CD4-positive, alpha-beta T cell (primary cell): ENCODE measurements at regions of chr11 and their contacts with region 1.

Region 1: GRCh38 chr11:108467091-108467823 is at the start of gene C11orf65:
- DNase-seq: peak; percentile 92 to 98 (median 94)
- ATAC-seq: peak; percentile 94
- H3K4me3 ChIP-seq: peak within 1 kb of the TSS; percentile 73
- H3K4me3 Mint-ChIP-seq: peak within 1 kb of the TSS; percentile 95
- H3K27ac ChIP-seq: peak within 1 kb of the TSS; percentile 90 to 98
- H3K27ac Mint-ChIP-seq: peak within 1 kb of the TSS; percentile 99
- H3K4me1 ChIP-seq: peaks cover 12% of the 10 kb centered on the region
- H3K4me1 Mint-ChIP-seq: peaks cover 19% of the 10 kb centered on the region
- H3K27me3 ChIP-seq: no peaks in the 10 kb centered on the region
- H3K27me3 Mint-ChIP-seq: no peaks in the 10 kb centered on the region
- CTCF ChIP-seq: no peak
- total RNA-seq, gene C11orf65: 0.30 to 0.75 TPM

Region 2: DNA sequence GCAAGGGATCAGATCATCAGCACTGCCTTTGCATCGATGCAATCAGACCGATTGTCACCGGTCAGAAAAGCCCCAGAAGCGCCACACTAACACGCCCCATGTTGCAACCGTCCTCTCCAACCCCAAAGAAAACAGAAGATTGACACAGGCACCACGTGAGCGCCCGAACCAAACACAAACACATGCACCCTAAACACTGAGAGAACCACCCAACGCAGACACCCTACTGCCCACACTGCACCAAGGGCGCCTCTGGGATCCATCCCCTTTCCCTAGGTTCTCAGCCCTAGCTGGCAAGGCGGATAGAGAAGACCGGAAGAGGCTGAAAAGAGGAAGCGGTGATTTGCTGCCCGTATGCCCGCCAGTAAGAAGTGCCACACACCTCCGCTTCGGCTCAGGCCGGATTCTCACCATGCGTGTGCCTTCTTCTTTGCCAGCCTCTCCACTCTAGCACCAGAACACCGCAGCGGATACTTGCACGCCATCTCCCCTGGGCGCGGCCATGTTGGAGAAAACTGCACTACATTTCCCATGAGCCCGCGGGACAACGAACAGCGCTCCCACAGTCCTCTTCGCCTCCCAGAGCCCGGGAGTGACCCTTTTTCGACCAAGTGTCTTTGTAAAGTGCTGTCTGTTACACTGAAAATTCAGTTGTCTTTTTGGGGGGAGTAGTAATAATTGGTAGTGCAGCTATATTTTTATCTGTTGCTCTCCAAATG is 901.9 kb before region 1 on chr11 and contains the start of gene ALKBH8:
- CTCF ChIA-PET with region 1: no interaction called
- POLR2A ChIA-PET with region 1: no interaction called
- intact Hi-C with region 1: loop called in 1 of 2 experiments (anchors 5 kb)
- DNase-seq: peak; percentile 62 to 90 (median 72)
- ATAC-seq: peak; percentile 95
- H3K4me3 ChIP-seq: peak within 1 kb of the TSS; percentile 70
- H3K4me3 Mint-ChIP-seq: peak within 1 kb of the TSS; percentile 91
- H3K27ac ChIP-seq: peak within 1 kb of the TSS; percentile 57 to 69
- H3K27ac Mint-ChIP-seq: peak within 1 kb of the TSS; percentile 85
- H3K4me1 ChIP-seq: peaks cover 16% of the 10 kb centered on the region
- H3K4me1 Mint-ChIP-seq: peaks cover 56% of the 10 kb centered on the region
- H3K27me3 ChIP-seq: no peaks in the 10 kb centered on the region
- H3K27me3 Mint-ChIP-seq: no peaks in the 10 kb centered on the region
- CTCF ChIP-seq: no peak
- total RNA-seq, gene ALKBH8: 6.5 to 7.7 TPM

Region 3: DNA sequence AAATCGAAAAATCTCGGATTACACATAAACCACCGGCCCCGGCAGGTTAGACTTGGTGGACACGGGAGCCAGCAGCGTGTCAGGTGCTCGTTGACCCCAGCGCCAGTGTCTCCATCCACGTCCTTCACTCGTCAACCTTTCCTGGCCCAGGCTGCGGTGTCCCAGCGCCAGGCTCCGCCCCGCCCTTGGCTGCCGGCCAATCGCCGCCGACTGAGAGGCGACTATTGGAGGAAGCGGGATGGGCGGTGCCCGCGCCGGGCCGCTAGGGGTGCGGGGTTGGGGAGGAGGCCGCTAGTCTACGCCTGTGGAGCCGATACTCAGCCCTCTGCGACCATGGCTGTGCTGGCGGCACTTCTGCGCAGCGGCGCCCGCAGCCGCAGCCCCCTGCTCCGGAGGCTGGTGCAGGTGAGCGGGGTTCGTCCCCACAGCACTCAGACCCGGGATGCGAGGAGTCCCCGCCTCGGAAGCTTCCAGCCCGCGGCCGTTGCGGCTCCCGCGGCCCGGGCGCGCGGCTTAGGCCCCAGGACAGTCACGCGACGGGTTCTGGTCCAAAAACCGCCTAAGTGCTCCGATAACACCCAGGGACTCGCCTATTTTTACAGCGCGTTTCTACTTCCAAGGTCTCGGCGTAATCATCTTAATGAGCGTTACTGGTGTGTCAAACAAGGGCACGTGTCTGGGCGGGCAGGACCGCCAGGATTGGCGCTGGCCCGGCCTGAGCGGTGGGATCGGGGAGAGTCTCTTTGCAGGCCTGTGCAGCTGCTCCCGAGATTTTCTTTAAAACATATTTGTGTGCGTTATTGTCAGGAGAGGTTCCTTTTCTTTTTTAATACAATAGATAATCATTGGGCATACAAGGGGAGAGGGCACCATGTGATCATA is 345.7 kb before region 1 on chr11 and contains the start of gene ACAT1:
- CTCF ChIA-PET with region 1: no interaction called
- POLR2A ChIA-PET with region 1: no interaction called
- intact Hi-C with region 1: loop called in 1 of 2 experiments (anchors 5 kb)
- DNase-seq: peak; percentile 91 to 98 (median 96)
- ATAC-seq: peak; percentile 98
- H3K4me3 ChIP-seq: peak within 1 kb of the TSS; percentile 84
- H3K4me3 Mint-ChIP-seq: peak within 1 kb of the TSS; percentile 89
- H3K27ac ChIP-seq: peak within 1 kb of the TSS in 1 of 2 donors; percentile 46
- H3K27ac Mint-ChIP-seq: peak within 1 kb of the TSS; percentile 53
- H3K4me1 ChIP-seq: peaks cover 40% of the 10 kb centered on the region
- H3K4me1 Mint-ChIP-seq: peaks cover 42% of the 10 kb centered on the region
- H3K27me3 ChIP-seq: no peaks in the 10 kb centered on the region
- H3K27me3 Mint-ChIP-seq: no peaks in the 10 kb centered on the region
- CTCF ChIP-seq: no peak
- total RNA-seq, gene ACAT1: 13.8 to 18.5 TPM

Region 4: GRCh38 chr11:108497317-108498045 is 30.2 kb after region 1 on chr11:
- CTCF ChIA-PET with region 1: no interaction called
- POLR2A ChIA-PET with region 1: interaction called, 16 read pairs
- intact Hi-C with region 1: loop called (anchors 1 to 2 kb)
- DNase-seq: peak; percentile 28 to 92 (median 60)
- ATAC-seq: peak; percentile 89
- H3K4me3 ChIP-seq: peak overlapping the region; percentile 77
- H3K4me3 Mint-ChIP-seq: peak overlapping the region; percentile 95
- H3K27ac ChIP-seq: peak overlapping the region; percentile 66 to 91
- H3K27ac Mint-ChIP-seq: peak overlapping the region; percentile 96
- H3K4me1 ChIP-seq: peaks cover 15% of the 10 kb centered on the region
- H3K4me1 Mint-ChIP-seq: peaks cover 27% of the 10 kb centered on the region
- H3K27me3 ChIP-seq: no peaks in the 10 kb centered on the region
- H3K27me3 Mint-ChIP-seq: no peaks in the 10 kb centered on the region
- CTCF ChIP-seq: no peak

Region 5: GRCh38 chr11:108664730-108665525 is 197.7 kb after region 1 on chr11 and contains the start of gene DDX10:
- CTCF ChIA-PET with region 1: no interaction called
- POLR2A ChIA-PET with region 1: interaction called, 3 read pairs
- intact Hi-C with region 1: loop called (anchors 2 to 5 kb)
- DNase-seq: peak; percentile 96 to 99 (median 98)
- ATAC-seq: peak; percentile 99
- H3K4me3 ChIP-seq: peak within 1 kb of the TSS; percentile 72
- H3K4me3 Mint-ChIP-seq: peak within 1 kb of the TSS; percentile 98
- H3K27ac ChIP-seq: peak within 1 kb of the TSS; percentile 32 to 55
- H3K27ac Mint-ChIP-seq: peak within 1 kb of the TSS; percentile 89
- H3K4me1 ChIP-seq: peaks cover 19% of the 10 kb centered on the region
- H3K4me1 Mint-ChIP-seq: peaks cover 42% of the 10 kb centered on the region
- H3K27me3 ChIP-seq: no peaks in the 10 kb centered on the region
- H3K27me3 Mint-ChIP-seq: no peaks in the 10 kb centered on the region
- CTCF ChIP-seq: no peak
- total RNA-seq, gene DDX10: 15.0 to 15.4 TPM